ENCODE measurements at regions of chr4 and their contacts with region 1.

Region 1: DNA sequence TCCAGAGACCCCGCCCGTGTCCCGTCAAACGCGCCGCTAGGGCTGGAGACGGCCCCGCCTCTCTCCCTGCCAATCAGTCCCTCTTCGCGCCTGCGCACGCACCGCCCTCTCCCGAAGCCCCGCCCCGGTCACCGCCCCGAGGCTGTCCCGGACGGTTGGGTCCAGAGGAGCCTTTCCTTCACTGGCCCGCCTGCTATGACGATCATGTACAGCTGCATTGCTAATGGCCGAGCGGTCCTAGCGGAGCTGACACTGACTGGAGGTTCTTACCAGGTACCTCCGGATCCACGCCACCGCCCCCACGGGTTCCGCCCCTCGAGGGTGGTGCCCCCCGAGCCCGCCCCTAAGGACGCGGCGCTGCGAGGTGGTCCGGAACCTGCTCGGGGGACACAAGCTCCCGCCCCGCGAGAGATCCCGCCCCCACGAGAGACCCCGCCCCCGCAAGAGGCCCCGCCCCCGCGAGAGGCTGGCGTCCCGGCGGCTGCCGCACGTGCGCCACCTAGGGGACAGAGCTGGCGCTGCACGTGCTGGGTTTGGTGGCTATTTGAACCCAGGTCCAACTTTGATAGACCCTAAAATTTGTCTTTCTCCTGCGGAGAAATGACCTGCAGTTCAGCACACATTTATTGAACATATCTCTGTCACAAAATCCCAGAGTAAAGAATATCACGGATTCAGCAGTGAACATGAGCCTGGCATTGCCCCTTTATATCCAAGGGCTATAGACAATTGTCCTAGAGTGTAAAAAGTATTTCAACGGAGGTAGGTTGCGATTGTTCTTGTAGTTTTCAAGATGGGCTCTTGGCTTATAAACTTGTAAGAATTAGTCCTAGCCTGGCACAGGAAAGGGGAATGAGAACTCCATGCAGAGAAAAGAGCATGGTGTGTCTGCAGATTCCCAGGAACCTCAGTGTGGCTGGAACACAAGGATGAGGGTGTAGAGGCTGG is 88.7 kb downstream of the HNRNPD start:
- DNase-seq: peak; percentile 100
- H3K4me3 Mint-ChIP-seq: peak overlapping the region; percentile 72
- H3K27ac Mint-ChIP-seq: peak overlapping the region; percentile 48
- H3K4me1 Mint-ChIP-seq: peaks cover 12% of the 10 kb centered on the region
- H3K27me3 Mint-ChIP-seq: peaks cover 27% of the 10 kb centered on the region

Region 2: DNA sequence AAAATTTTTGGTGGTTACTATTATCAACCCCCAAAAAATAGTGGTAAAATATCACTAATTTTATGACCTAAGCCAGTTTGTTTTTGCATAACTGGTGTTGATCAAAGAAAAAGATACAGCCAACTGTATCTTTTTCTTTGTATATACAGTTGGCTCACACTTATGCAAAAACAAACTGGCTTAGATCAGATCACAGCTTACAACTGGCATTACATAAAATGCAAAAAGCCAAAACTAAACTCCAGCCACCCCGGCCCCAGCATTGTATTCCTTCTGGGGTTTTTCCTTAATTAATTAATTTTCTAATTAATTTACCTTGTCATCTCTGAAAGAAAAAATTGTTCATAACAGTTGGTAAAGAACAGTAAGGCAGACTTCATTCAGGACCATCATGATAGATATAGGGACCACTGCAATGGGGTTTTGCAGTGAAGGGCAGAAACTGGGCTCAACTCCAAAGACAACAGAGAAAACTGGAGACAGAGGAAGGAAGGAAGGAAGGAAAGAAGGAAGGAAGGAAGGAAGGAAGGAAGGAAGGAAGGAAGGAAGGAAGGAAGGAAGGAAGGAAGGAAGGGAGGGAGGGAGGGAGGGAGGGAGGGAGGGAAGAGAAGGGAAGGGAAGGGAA is 113.5 kb before region 1 on chr4:
- intact Hi-C with region 1: no loop called
- DNase-seq: no peak
- H3K4me3 Mint-ChIP-seq: no peak overlapping the region
- H3K27ac Mint-ChIP-seq: no peak overlapping the region
- H3K4me1 Mint-ChIP-seq: no peaks in the 10 kb centered on the region
- H3K27me3 Mint-ChIP-seq: no peaks in the 10 kb centered on the region

Region 3: DNA sequence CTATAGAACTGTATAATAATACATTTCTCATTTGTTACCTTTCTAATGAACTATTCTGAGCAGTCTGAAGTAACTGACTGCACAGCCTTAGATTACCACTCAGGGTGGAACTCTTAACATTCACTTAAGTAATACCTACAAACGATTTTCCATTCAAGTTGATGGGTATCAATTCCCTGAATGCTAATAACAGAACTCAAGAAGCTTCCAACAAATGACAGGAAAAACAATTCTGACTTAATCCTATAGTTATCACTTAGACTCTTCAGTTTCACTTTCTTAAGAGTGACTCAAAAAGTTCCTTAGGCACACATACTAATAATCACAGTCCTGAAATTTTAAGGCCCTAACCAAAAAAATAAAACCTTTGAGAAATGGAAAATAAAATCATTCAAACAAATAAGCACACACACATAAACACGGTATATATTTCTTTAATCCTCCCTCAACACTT is 67.8 kb after region 1 on chr4:
- intact Hi-C with region 1: loop called (anchors 2 kb)
- DNase-seq: no peak
- H3K4me3 Mint-ChIP-seq: peak overlapping the region; percentile 28
- H3K27ac Mint-ChIP-seq: peak overlapping the region; percentile 90
- H3K4me1 Mint-ChIP-seq: peaks cover 40% of the 10 kb centered on the region
- H3K27me3 Mint-ChIP-seq: no peaks in the 10 kb centered on the region

Region 4: DNA sequence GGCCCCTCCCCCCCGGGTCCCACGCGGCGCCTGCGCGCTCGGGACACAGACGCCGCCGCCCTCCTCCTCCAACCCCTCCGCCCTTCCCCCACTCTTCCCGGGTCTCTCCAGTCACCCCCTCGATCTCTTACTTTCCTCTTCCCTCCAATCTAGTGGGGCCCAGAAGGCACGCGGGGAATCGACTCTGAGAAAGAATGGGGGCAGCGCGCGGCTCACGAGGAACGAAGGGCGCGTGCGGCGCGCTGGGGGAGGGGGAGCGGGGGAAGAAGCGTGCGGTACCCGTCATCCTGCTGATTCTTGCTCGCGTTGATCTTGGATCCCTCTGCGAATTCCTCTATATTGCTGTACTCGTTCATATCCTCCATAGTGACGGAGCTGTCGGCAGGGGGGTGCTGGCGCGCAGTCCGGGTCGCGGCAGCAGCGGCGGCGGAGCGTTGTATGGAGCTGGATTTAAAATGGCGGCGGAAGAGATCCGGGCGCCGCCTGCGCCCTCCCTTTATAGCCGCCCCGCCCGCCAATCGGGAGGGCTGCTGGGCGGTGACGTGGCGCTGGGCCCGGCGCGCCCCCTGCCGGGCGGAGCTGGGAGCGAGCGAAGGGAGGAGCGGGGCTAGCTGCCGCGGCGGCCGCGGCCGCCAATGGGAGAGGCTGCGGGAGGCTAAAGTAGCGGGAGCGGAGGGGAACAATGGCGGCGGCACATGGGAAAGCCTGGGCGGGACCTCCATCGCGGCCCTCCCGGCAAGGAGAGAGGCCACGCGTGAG is 144.0 kb after region 1 on chr4:
- intact Hi-C with region 1: loop called (anchors 1 kb)
- DNase-seq: peak; percentile 98
- H3K4me3 Mint-ChIP-seq: peak overlapping the region; percentile 96
- H3K27ac Mint-ChIP-seq: peak overlapping the region; percentile 99
- H3K4me1 Mint-ChIP-seq: peaks cover 61% of the 10 kb centered on the region
- H3K27me3 Mint-ChIP-seq: no peaks in the 10 kb centered on the region